HCT116 (cell line): ENCODE measurements at regions of chr11 and their contacts with region 1.

Region 1: DNA sequence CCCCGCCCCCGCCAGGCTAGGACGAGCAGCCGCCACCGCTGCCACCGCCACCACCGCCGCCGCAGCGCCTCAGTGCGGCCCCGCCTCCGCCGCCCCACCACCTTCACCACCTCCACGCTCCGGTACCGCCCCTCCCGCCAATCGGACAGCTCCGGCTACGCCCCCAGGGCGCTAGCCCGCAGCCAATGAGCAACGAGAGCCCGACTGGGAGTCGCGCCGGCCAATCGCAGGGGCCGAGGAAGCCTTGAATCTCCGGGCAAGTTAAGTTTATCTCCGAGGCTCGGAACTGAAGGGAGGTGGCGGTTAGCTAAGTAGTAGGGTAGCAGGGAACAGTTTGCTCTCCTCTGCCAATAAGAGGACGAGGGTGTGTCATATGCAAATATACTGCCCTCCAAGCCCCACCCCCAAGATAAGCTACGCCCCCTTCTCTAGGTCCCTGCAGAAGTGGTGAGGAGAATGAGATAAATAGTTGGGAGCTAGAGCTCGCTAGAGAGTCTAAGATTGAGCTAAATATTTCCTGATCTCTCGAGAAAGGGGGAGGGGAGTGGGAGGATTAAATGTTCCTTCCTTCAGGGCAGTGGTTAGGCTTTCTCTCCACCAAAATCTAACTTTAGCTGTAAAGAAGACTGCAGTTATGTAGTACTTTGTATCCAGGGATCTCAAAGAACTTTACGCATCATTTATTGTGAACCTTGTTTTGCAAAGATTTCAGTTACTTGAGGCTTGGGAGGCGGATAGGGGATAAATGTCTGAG is at the start of gene SESN3:
- DNase-seq: peak; percentile 87
- ATAC-seq: peak; percentile 97
- H3K4me3 ChIP-seq: peak within 1 kb of the TSS; percentile 34 to 51
- H3K27ac ChIP-seq: peak within 1 kb of the TSS; percentile 8; the same call in 1 of the 2 replicates
- H3K4me1 ChIP-seq: peaks cover 4 to 18% of the 10 kb centered on the region in 2 experiments; a peak in 2 of 4 replicates
- H3K27me3 ChIP-seq: peaks cover 9% of the 10 kb centered on the region; the same call in 1 of the 2 replicates
- CTCF ChIP-seq: no peak
- POLR2A ChIP-seq: no peak
- RAD21 ChIP-seq: no peak
- total RNA-seq, gene SESN3: 4.2 TPM

Region 2: GRCh38 chr11:95138448-95138847 is 92.9 kb before region 1 on chr11:
- CTCF ChIA-PET with region 1: no interaction called
- POLR2A ChIA-PET with region 1: no interaction called
- RAD21 ChIA-PET with region 1: no interaction called
- intact Hi-C with region 1: no loop called
- DNase-seq: no peak
- ATAC-seq: peak; percentile 83
- H3K4me3 ChIP-seq: no peak overlapping the region
- H3K27ac ChIP-seq: no peak overlapping the region
- H3K4me1 ChIP-seq: peaks cover 9 to 14% of the 10 kb centered on the region in 2 experiments; a peak in 2 of 4 replicates
- H3K27me3 ChIP-seq: no peaks in the 10 kb centered on the region
- CTCF ChIP-seq: peak; percentile 19 to 62 (median 36); a peak in 2 of 6 replicates
- POLR2A ChIP-seq: no peak
- RAD21 ChIP-seq: peak; percentile 77

Region 3: DNA sequence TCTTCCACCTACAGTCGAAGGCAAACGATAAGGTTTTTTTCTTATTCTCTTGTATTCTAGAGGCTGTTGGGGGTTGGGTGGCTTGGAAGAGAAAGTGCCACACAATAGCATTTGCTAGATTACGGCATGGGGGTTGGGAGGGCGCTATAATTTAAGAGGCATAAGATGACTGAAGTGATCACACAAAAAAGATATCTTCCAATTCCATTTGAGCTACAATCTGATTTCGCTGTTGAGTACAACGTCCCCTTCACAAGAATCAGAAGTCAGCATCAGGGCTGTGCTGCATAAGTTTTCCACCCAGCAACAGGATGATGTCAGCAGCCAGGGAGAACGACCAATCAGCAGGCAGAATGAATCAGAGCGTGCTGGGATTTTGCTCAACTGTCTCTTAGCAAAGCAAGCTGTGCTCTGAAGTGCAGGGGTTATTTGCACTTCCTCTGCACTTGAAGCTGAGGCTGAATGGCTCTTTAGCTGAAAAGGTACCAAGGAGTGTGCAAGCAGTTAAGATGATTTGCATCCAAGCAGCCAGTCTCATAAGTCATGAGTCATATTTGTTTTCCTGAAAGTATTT is 22.9 kb after region 1 on chr11:
- CTCF ChIA-PET with region 1: no interaction called
- POLR2A ChIA-PET with region 1: interaction called, 4 read pairs
- RAD21 ChIA-PET with region 1: interaction called in 1 of 2 experiments, 5 read pairs
- intact Hi-C with region 1: loop called (anchors 1 kb)
- DNase-seq: peak; percentile 64
- ATAC-seq: peak; percentile 99
- H3K4me3 ChIP-seq: peak overlapping the region; percentile 24 to 38
- H3K27ac ChIP-seq: no peak overlapping the region
- H3K4me1 ChIP-seq: peaks cover 13 to 14% of the 10 kb centered on the region in 2 experiments
- H3K27me3 ChIP-seq: no peaks in the 10 kb centered on the region
- CTCF ChIP-seq: no peak
- POLR2A ChIP-seq: no peak
- RAD21 ChIP-seq: no peak

Region 4: DNA sequence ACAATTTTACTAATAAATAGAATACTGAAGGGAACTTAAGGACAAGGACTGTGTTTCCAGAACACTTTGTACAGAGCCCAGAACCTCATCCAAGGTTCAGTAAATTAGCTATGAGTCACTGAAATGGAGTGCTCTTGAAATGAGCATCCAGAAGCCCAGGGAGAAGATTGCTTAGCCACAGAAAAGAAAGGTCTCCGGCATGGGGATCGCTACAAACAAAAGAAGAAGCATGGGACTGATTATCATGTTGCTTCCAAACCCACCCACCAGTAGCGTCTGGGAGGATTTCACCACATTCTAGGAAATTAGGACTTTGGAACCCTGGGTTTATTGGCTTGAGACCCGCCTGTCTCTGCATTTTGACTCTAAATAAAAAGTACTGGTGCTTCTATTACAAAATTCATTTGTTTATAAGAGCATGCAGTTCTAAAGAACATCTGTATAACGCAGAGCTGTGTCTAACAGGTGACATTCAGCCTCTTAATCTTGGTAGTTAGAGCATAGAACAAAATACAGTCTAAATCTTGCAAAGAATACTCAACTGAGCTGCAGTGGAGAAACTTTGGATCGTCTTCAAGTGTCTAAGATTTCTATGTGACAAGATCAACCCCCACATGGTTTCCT is 35.6 kb after region 1 on chr11:
- CTCF ChIA-PET with region 1: no interaction called
- POLR2A ChIA-PET with region 1: no interaction called
- RAD21 ChIA-PET with region 1: no interaction called
- intact Hi-C with region 1: no loop called
- DNase-seq: no peak
- ATAC-seq: no peak
- H3K4me3 ChIP-seq: no peak overlapping the region
- H3K27ac ChIP-seq: no peak overlapping the region
- H3K4me1 ChIP-seq: no peaks in the 10 kb centered on the region
- H3K27me3 ChIP-seq: peaks cover 5% of the 10 kb centered on the region; the same call in 1 of the 2 replicates
- CTCF ChIP-seq: no peak
- POLR2A ChIP-seq: no peak
- RAD21 ChIP-seq: no peak